ENCODE measurements at regions of chr20 and their contacts with region 1.

Region 1: DNA sequence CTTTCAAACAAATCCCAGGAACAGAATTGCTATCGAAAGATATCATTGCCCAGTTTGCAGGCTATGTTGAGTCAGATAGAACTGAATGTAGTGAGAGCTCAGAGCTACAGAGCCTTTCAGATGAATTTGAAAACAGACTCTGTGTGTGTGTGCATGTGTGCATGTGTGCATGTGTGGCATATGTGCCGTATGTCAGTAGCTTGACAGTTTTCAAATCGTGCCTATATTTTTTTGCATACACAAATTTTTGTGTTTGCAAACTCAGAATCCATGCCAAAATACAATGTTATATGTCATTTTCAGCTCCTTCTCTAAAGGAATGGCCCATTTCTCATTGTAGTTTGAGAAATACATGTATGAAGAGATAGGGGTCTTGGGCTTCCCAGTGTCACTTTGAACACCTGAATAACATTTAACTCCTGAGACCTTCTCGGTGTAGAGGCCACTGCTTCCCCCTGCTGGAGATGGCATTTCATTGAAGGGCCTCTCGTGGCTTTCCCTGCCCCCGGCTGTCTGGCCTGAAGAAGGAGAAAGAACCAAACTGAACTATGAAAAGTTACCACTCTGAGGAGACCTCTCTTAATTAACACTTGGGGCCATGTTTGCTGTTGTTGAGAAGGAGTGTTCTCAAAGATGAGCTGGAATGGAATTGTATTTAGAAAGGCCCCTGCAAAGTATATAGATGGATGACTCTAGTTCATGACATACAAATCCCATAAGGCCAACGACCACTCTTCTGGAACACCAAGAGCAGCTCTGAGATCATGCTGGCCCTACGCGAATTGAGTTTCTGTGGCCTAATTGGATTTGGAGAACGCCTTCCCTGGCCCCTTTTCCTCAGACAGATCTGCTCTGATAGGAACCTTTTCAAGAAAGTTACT is 58.7 kb downstream of the VAPB start:
- DNase-seq: no peak
- H3K4me3 ChIP-seq: no peak overlapping the region
- H3K27ac ChIP-seq: no peak overlapping the region
- H3K4me1 ChIP-seq: peaks cover 0 to 10% (median 0%) of the 10 kb centered on the region in 6 donors
- H3K27me3 ChIP-seq: no peaks in the 10 kb centered on the region
- CTCF ChIP-seq: peak in 9 of 11 experiments; percentile 21 to 71 (median 53)
- POLR2A ChIP-seq: no peak

Region 2: DNA sequence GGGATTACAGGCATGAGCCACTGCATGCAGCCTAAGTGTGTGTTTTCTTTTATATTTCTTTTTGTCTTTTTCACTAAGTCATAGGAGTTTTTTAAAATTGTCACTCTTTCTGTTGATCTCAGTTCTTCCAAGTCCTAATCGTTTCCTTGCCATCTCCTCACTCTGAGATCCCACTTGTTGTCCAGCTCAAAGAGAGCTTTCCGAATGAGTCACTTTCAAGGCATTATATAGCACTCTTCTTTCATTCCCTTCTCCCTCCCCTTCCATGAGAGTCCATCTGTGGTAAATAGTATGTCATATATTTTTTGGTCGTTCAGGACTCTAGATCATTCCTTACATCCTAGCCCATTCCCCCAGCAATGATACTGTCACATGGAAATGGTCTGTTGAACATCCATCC is 54.5 kb before region 1 on chr20:
- intact Hi-C with region 1: loop called (anchors 10 kb)
- DNase-seq: no peak
- H3K4me3 ChIP-seq: no peak overlapping the region
- H3K27ac ChIP-seq: no peak overlapping the region
- H3K4me1 ChIP-seq: peaks cover 26 to 91% (median 66%) of the 10 kb centered on the region in 6 donors
- H3K27me3 ChIP-seq: no peaks in the 10 kb centered on the region
- CTCF ChIP-seq: no peak
- POLR2A ChIP-seq: no peak

Region 3: DNA sequence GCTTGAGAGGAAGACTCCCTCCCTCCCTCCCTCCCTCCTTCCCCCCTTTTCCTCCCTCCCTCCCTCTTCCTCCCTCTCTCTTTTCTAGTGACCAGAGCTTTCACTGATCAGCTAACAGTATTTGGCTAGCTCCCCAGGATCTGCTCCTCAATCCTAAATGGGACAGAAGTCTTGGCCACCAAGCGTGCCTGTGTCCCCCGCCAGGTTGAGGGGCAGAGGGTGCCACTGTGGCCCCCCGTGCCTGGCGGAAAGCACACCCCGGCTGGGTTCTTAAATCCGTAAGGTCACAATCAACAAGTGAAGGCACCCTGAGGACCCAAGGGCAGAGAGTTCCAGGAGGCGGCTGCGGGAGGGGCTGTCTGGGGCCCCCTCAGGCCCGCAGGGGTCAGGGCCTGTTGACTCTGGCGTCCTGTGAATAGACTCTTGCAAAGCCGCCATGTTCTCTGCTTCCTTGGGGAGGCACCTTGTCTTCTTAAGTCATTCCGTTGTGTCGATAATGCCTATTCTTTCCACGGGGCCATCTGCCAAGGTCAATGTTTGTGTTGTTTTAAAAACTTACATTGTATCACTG is 164.5 kb after region 1 on chr20:
- intact Hi-C with region 1: no loop called
- DNase-seq: peak; percentile 51
- H3K4me3 ChIP-seq: no peak overlapping the region
- H3K27ac ChIP-seq: no peak overlapping the region
- H3K4me1 ChIP-seq: no peaks in the 10 kb centered on the region
- H3K27me3 ChIP-seq: peaks cover 0 to 2% (median 0%) of the 10 kb centered on the region in 7 donors
- CTCF ChIP-seq: no peak
- POLR2A ChIP-seq: no peak

Measured in spleen (tissue), 13 donors.